H1 (cell line): ENCODE measurements at regions of chr9 and their contacts with region 1.

Region 1: GRCh38 chr9:114155263-114155972 is at the start of gene COL27A1:
- DNase-seq: peak; percentile 49 to 98
- H3K4me3 ChIP-seq: peak within 1 kb of the TSS; percentile 49 to 86 (median 70)
- H3K27ac ChIP-seq: no peak within 1 kb of the TSS
- H3K4me1 ChIP-seq: peaks cover 0 to 14% (median 11%) of the 10 kb centered on the region in 4 experiments; a peak in 6 of 7 replicates
- H3K27me3 ChIP-seq: peaks cover 4 to 26% (median 21%) of the 10 kb centered on the region in 4 experiments
- CTCF ChIP-seq: peak in 2 of 3 experiments; percentile 82 to 87; a peak in 3 of 4 replicates
- EP300 ChIP-seq: no peak
- POLR2A ChIP-seq: no peak
- RAD21 ChIP-seq: peak; percentile 71 to 81
- total RNA-seq, gene COL27A1: 22.5 and 22.8 TPM in 2 replicates

Region 2: DNA sequence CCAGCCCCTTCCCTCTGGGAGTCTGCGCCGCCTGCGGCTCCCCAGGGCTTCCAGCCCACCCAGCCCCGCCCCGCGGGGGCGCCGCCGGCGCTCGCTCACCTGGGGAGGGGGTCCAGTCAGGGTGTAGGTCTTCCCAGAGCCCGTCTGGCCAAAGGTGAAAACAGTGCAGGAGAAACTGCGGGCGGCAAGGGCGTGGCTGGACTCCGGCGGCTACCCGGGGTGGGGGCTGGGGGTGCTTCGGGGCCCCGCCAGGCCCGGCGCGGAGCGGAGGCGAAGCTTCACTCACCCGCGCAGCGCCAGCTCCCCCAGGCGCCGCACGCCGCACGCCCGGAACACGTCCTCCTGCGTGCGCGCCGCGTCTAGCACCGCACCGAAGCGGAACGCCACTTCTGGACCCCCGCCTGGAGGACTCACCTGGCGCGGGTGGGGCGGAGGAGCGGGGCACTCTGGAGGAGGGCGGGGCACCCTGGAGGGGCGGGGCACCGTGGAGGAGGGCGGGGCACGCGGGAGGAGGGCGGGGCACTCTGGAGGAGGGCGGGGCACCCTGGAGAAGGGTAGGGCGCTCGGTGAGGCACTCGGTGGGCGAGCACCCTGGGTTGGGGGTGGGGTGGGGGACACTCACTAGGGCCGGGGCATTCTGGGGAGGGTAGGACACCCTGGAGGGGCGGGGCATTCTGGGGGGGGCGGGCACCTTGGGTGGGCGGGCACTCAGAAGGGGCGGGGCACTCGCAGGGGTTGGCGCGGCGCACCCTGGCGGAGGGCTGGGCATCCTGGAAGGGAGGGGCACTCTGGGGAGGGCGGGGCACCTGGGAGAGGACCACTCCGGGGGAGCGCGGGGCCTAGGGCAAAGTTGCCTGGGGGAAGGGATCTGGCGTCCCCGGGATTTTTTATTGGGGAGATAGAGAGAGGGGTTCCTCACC is 57.1 kb before region 1 on chr9:
- CTCF ChIA-PET with region 1: interaction called, 15 read pairs
- POLR2A ChIA-PET with region 1: interaction called, 3 read pairs
- DNase-seq: peak in 1 of 2 experiments; percentile 88
- H3K4me3 ChIP-seq: peak overlapping the region; percentile 58 to 84 (median 62)
- H3K27ac ChIP-seq: no peak overlapping the region
- H3K4me1 ChIP-seq: peaks cover 0 to 16% (median 10%) of the 10 kb centered on the region in 4 experiments; a peak in 6 of 7 replicates
- H3K27me3 ChIP-seq: peaks cover 2 to 27% (median 19%) of the 10 kb centered on the region in 4 experiments
- CTCF ChIP-seq: peak in 1 of 3 experiments; percentile 33; a peak in 1 of 4 replicates
- EP300 ChIP-seq: no peak
- POLR2A ChIP-seq: no peak
- RAD21 ChIP-seq: no peak

Region 3: DNA sequence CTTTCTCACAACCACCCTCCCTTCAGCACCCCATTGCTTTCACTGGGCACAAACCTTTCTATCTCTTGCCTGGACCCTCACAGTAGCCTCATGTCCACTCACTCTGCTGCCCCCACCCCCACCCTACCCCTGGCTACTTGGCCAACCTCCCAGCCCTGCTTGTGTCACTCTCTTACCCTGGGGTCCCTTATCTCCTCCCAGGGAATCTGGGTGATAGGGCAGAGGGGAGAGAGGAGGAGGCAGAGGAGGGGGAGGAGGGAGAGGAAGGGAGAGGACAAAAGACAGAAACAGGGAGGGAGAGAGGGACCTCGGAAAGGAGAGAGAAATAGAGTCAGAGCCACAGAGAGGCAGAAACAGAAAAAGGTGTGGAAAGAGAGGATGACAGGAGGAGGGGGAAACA is 31.3 kb before region 1 on chr9:
- CTCF ChIA-PET with region 1: interaction called, 12 read pairs
- POLR2A ChIA-PET with region 1: no interaction called
- DNase-seq: no peak
- H3K4me3 ChIP-seq: no peak overlapping the region
- H3K27ac ChIP-seq: no peak overlapping the region
- H3K4me1 ChIP-seq: peaks cover 0 to 7% (median 0%) of the 10 kb centered on the region in 4 experiments; a peak in 2 of 7 replicates
- H3K27me3 ChIP-seq: 0 out of 7 replicates have a peak, but pooled peaks cover 0 to 3% (median 0%) of the 10 kb centered on the region in 4 experiments
- CTCF ChIP-seq: no peak
- EP300 ChIP-seq: no peak
- POLR2A ChIP-seq: no peak
- RAD21 ChIP-seq: no peak

Region 4: GRCh38 chr9:114141553-114142402 is 13.6 kb before region 1 on chr9:
- CTCF ChIA-PET with region 1: interaction called, 68 read pairs
- POLR2A ChIA-PET with region 1: interaction called, 3 read pairs
- DNase-seq: no peak
- H3K4me3 ChIP-seq: no peak overlapping the region
- H3K27ac ChIP-seq: no peak overlapping the region
- H3K4me1 ChIP-seq: no peaks in the 10 kb centered on the region
- H3K27me3 ChIP-seq: peaks cover 0 to 2% (median 0%) of the 10 kb centered on the region in 4 experiments; a peak in 3 of 7 replicates
- CTCF ChIP-seq: no peak
- EP300 ChIP-seq: no peak
- POLR2A ChIP-seq: no peak
- RAD21 ChIP-seq: no peak

Region 5: DNA sequence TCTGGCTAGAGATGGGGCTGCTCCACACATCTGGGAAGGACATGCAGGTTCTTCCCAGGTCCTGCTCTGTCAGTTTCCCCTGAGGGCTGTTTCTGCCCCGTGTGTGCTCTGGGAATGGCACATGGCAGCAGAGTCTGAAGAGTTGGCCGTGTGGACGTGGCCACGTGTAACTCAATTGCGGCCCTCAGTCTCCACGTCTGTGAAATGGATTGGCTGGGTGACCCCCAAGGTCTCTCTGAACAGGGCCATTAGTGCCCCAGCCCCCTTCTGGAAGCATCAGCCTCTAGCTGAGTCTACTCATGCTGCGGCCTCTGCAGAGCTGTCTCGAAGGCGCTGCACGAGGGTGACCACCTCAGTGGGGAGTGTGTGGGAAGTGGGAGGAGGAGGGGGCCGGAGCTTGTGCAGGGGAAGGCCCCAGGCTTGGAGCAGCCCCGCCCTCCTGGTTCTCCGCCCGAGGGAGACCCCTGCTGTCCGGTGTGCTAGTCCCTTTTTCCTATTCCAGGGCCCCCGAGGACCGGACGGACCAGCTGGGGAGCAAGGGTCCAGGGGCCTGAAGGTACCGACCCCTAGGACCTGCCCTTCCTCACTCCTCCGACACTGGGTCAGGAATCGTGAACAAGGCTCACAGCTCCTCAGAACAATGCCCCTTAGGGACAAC is 108.6 kb after region 1 on chr9:
- CTCF ChIA-PET with region 1: interaction called, 57 read pairs
- POLR2A ChIA-PET with region 1: no interaction called
- DNase-seq: peak in 1 of 2 experiments; percentile 79
- H3K4me3 ChIP-seq: no peak overlapping the region
- H3K27ac ChIP-seq: no peak overlapping the region
- H3K4me1 ChIP-seq: peaks cover 0 to 3% (median 0%) of the 10 kb centered on the region in 4 experiments; a peak in 2 of 7 replicates
- H3K27me3 ChIP-seq: no peaks in the 10 kb centered on the region
- CTCF ChIP-seq: peak; percentile 26 to 45 (median 33); a peak in 3 of 4 replicates
- EP300 ChIP-seq: no peak
- POLR2A ChIP-seq: no peak
- RAD21 ChIP-seq: peak; percentile 54 to 57

Region 6: DNA sequence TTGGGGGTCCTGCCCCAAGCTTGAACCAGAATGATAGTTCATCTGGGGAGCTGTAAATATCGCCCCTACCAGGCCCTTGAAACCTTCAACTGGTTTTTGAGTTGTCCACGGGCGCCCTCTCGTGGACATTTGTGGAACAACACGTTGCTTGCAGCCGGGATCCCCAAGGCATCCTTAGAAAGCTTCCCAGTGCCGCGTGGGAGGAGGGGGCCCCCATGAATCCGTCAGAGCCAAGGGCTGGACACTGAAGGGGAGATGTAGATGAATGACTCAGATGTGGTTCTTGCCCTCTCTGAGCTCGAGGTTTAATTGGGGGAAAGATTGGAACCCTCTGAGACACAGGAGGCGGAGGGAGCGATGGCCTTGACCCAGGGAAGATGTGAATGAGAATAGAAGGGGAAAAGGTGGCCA is 135.7 kb after region 1 on chr9:
- CTCF ChIA-PET with region 1: interaction called, 78 read pairs
- POLR2A ChIA-PET with region 1: no interaction called
- DNase-seq: peak; percentile 62 to 97
- H3K4me3 ChIP-seq: no peak overlapping the region
- H3K27ac ChIP-seq: no peak overlapping the region
- H3K4me1 ChIP-seq: peaks cover 0 to 13% (median 2%) of the 10 kb centered on the region in 4 experiments; a peak in 5 of 7 replicates
- H3K27me3 ChIP-seq: no peaks in the 10 kb centered on the region
- CTCF ChIP-seq: peak in 2 of 3 experiments; percentile 85 to 92; a peak in 3 of 4 replicates
- EP300 ChIP-seq: no peak
- POLR2A ChIP-seq: no peak
- RAD21 ChIP-seq: peak; percentile 92 to 94